CD4-positive, alpha-beta T cell (primary cell): ENCODE measurements at regions of chr3 and their contacts with region 1.

Region 1: GRCh38 chr3:40452876-40453730 is 4.0 kb upstream of the RPL14 start:
- DNase-seq: peak; percentile 87 to 99 (median 94)
- ATAC-seq: peak; percentile 90
- H3K4me3 ChIP-seq: peak overlapping the region; percentile 84
- H3K4me3 Mint-ChIP-seq: peak overlapping the region; percentile 88
- H3K27ac ChIP-seq: peak overlapping the region; percentile 88 to 97
- H3K27ac Mint-ChIP-seq: peak overlapping the region; percentile 91
- H3K4me1 ChIP-seq: peaks cover 31% of the 10 kb centered on the region
- H3K4me1 Mint-ChIP-seq: peaks cover 43% of the 10 kb centered on the region
- H3K27me3 ChIP-seq: no peaks in the 10 kb centered on the region
- H3K27me3 Mint-ChIP-seq: no peaks in the 10 kb centered on the region
- CTCF ChIP-seq: no peak

Region 2: GRCh38 chr3:39051647-39052561 is 1401.2 kb before region 1 on chr3 and contains the starts of genes SCN11A and WDR48:
- CTCF ChIA-PET with region 1: no interaction called
- POLR2A ChIA-PET with region 1: no interaction called
- intact Hi-C with region 1: loop called in 1 of 2 experiments (anchors 5 kb)
- DNase-seq: peak; percentile 85 to 97 (median 90)
- ATAC-seq: peak; percentile 89
- H3K4me3 ChIP-seq: peak within 1 kb of the TSS; percentile 84
- H3K4me3 Mint-ChIP-seq: peak within 1 kb of the TSS; percentile 95
- H3K27ac ChIP-seq: peak within 1 kb of the TSS; percentile 90 to 95
- H3K27ac Mint-ChIP-seq: peak within 1 kb of the TSS; percentile 99
- H3K4me1 ChIP-seq: peaks cover 25% of the 10 kb centered on the region
- H3K4me1 Mint-ChIP-seq: peaks cover 72% of the 10 kb centered on the region
- H3K27me3 ChIP-seq: no peaks in the 10 kb centered on the region
- H3K27me3 Mint-ChIP-seq: no peaks in the 10 kb centered on the region
- CTCF ChIP-seq: no peak
- total RNA-seq, gene SCN11A: 0.08 TPM in 1 of 2 experiments, not detected in the other
- total RNA-seq, gene WDR48: 81.2 to 88.6 TPM

Region 3: DNA sequence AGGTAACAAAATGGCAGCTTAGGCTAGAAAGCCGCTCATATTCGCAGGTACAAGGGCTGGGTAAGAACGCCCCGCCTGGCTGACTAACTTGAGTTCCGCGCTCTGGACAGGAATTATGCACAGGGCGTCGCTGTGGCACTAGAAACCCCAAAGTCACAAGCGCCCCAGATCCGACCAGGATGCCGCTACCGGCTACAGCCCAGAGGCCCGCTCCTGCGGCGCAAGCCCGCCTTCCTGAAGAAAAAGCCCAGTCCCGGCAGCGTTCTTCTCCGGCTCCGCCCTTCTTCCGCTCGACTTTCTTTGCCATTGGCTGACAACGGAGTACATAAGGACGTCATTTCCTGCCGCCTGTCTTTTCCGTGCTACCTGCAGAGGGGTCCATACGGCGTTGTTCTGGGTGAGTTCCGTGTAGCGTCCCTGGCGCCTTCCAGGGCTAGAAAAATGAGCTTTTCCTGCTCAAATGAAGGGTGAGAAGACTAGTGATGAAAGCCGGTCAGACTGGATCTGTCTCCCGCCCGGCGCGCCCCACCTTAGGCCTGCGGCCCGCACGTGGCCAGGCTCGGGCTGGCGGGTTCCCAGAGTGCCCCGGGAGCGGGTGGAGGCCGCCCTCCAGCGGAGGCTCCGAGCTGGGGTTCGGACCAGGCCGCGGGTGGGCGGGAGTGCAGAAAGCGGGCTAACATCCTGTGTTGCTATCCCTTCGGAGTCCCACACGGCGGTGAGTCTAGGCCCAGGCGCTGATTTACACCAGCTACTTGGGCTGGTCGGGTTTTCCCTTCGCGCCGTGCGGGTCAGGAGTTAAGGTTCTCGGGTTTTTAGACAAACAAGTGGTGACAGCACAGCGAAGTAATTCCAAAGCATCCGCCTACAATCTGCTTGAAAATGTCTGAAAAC is 1046.5 kb before region 1 on chr3 and contains the start of gene RPSA:
- CTCF ChIA-PET with region 1: no interaction called
- POLR2A ChIA-PET with region 1: interaction called, 3 read pairs
- intact Hi-C with region 1: loop called in 1 of 2 experiments (anchors 5 kb)
- DNase-seq: peak; percentile 90 to 99 (median 94)
- ATAC-seq: peak; percentile 90
- H3K4me3 ChIP-seq: peak within 1 kb of the TSS; percentile 78
- H3K4me3 Mint-ChIP-seq: peak within 1 kb of the TSS; percentile 86
- H3K27ac ChIP-seq: peak within 1 kb of the TSS; percentile 76 to 88
- H3K27ac Mint-ChIP-seq: peak within 1 kb of the TSS; percentile 88
- H3K4me1 ChIP-seq: peaks cover 38% of the 10 kb centered on the region
- H3K4me1 Mint-ChIP-seq: peaks cover 48% of the 10 kb centered on the region
- H3K27me3 ChIP-seq: no peaks in the 10 kb centered on the region
- H3K27me3 Mint-ChIP-seq: no peaks in the 10 kb centered on the region
- CTCF ChIP-seq: peak; percentile 27
- total RNA-seq, gene RPSA: 1,930 to 1,974 TPM

Region 4: GRCh38 chr3:40224796-40225515 is 228.1 kb before region 1 on chr3:
- CTCF ChIA-PET with region 1: no interaction called
- POLR2A ChIA-PET with region 1: no interaction called
- intact Hi-C with region 1: no loop called
- DNase-seq: no peak
- ATAC-seq: no peak
- H3K4me3 ChIP-seq: no peak overlapping the region
- H3K4me3 Mint-ChIP-seq: no peak overlapping the region
- H3K27ac ChIP-seq: no peak overlapping the region
- H3K27ac Mint-ChIP-seq: no peak overlapping the region
- H3K4me1 ChIP-seq: no peaks in the 10 kb centered on the region
- H3K4me1 Mint-ChIP-seq: no peaks in the 10 kb centered on the region
- H3K27me3 ChIP-seq: no peaks in the 10 kb centered on the region
- H3K27me3 Mint-ChIP-seq: no peaks in the 10 kb centered on the region
- CTCF ChIP-seq: no peak

Region 5: DNA sequence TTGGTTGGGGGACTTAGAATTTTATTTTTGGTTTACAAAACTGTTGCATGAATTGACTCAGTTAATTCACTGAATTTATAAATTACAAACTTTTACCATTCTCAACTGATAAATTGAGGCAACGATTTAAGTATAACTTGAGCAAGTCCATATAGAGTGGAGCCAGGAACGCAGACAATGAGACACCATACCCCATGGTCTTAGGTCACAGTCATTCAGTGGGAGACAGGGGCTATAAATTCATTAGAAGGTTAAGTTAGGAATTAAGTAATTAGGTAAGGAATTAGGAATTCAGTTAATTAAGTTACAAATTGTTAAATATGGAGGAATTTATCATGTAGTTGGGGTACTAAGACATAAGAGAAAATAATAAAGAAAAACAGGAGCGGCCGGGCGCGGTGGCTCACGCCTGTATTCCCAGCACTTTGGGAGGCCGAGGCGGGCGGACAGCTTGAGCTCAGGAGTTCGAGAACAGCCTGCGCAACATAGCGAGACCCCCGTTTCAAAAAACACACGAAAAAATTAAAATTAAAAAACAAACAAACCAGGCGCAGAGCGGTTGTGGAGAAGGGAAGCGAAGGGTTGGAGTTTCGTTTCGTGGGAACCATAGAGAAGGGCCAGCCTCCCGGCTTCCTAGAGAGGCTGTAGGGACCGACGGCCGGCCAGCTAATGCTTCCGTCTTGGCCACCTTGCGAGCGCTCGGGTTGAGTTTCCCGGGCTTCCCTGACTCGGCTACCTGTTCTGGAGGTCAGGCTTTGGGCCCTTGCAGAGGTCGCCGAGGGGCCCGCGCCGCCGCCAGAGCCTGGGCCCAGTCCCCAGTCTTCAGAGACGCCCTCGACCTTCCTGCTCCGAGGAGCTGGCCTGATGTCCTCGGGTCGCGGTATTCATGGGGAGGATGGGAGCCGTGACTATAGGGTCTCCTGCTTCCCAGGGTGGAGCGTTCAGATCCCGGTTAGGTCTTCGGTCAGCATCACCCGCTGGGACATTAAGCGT is 23.7 kb after region 1 on chr3 and contains the start of gene ZNF619:
- CTCF ChIA-PET with region 1: no interaction called
- POLR2A ChIA-PET with region 1: interaction called, 17 read pairs
- intact Hi-C with region 1: no loop called
- DNase-seq: peak in 13 of 14 experiments; percentile 22 to 80 (median 46)
- ATAC-seq: peak; percentile 80
- H3K4me3 ChIP-seq: peak within 1 kb of the TSS; percentile 80
- H3K4me3 Mint-ChIP-seq: peak within 1 kb of the TSS; percentile 87
- H3K27ac ChIP-seq: peak within 1 kb of the TSS in 1 of 2 donors; percentile 61
- H3K27ac Mint-ChIP-seq: peak within 1 kb of the TSS; percentile 64
- H3K4me1 ChIP-seq: peaks cover 17% of the 10 kb centered on the region
- H3K4me1 Mint-ChIP-seq: peaks cover 24% of the 10 kb centered on the region
- H3K27me3 ChIP-seq: no peaks in the 10 kb centered on the region
- H3K27me3 Mint-ChIP-seq: no peaks in the 10 kb centered on the region
- CTCF ChIP-seq: no peak
- total RNA-seq, gene ZNF619: 2.6 to 2.9 TPM

Region 6: DNA sequence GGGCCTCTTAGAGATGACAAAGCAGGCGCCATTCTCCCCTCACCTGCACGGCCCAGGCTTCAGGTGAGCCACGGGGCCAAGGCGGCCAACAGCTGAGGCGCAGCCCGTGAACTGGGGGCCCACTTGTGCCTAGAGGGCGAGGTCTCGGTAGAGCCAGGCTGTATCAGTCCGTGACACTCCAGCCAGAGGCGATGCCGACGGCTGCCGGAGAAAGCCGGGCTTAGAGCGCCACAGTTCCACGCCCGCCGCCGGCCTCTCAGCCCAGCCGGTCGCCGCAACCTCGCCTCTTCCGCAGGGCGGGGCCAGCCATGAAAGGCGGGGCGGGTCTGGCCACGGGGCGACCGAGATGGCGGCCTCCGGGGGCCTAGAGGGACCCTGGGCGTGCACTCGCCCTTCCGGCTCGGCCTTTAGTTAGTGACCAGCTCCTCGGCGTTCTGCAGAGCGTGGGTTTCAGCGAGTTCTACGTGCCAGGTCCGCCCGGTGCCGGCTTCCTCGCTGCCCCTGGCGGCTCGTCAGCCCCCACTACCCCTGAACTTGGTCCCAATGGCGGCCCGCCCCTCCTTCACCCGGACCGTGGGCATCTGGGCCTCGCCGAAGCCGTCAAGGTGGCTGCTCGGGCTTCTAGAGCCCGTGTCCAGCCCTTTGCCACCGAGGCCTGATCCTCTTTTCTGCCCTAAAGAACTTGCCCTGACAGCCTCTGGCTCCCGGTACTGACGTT is 71.6 kb after region 1 on chr3 and contains the start of gene ZNF621:
- CTCF ChIA-PET with region 1: no interaction called
- POLR2A ChIA-PET with region 1: interaction called, 22 read pairs
- intact Hi-C with region 1: loop called (anchors 2 kb)
- DNase-seq: peak; percentile 60 to 89 (median 80)
- ATAC-seq: peak; percentile 93
- H3K4me3 ChIP-seq: peak within 1 kb of the TSS; percentile 80
- H3K4me3 Mint-ChIP-seq: peak within 1 kb of the TSS; percentile 96
- H3K27ac ChIP-seq: peak within 1 kb of the TSS; percentile 73 to 85
- H3K27ac Mint-ChIP-seq: peak within 1 kb of the TSS; percentile 88
- H3K4me1 ChIP-seq: peaks cover 20% of the 10 kb centered on the region
- H3K4me1 Mint-ChIP-seq: peaks cover 25% of the 10 kb centered on the region
- H3K27me3 ChIP-seq: no peaks in the 10 kb centered on the region
- H3K27me3 Mint-ChIP-seq: no peaks in the 10 kb centered on the region
- CTCF ChIP-seq: no peak
- total RNA-seq, gene ZNF621: 8.6 to 8.8 TPM

Region 7: GRCh38 chr3:41961750-41962679 is 1508.9 kb after region 1 on chr3 and contains the start of gene ULK4:
- CTCF ChIA-PET with region 1: no interaction called
- POLR2A ChIA-PET with region 1: interaction called, 5 read pairs
- intact Hi-C with region 1: loop called (anchors 5 to 10 kb)
- DNase-seq: peak; percentile 87 to 99 (median 92)
- ATAC-seq: peak; percentile 83
- H3K4me3 ChIP-seq: peak within 1 kb of the TSS; percentile 100
- H3K4me3 Mint-ChIP-seq: peak within 1 kb of the TSS; percentile 100
- H3K27ac ChIP-seq: peak within 1 kb of the TSS; percentile 86 to 97
- H3K27ac Mint-ChIP-seq: peak within 1 kb of the TSS; percentile 98
- H3K4me1 ChIP-seq: peaks cover 19% of the 10 kb centered on the region
- H3K4me1 Mint-ChIP-seq: peaks cover 26% of the 10 kb centered on the region
- H3K27me3 ChIP-seq: no peaks in the 10 kb centered on the region
- H3K27me3 Mint-ChIP-seq: no peaks in the 10 kb centered on the region
- CTCF ChIP-seq: no peak
- total RNA-seq, gene ULK4: 23.8 to 28.6 TPM